Activated T-helper 1 cell treated with anti-CD3 and anti-CD28 coated beads, Interleukin-12 subunit alpha, Interleukin-12 subunit beta, Interleukin-2, Interleukin-4 antibody, amounts not matched to agents 30 ng/mL and 10 ng/mL and 1 ng/mL, durations not matched to agents 14 hours and 24 hours and 36 hours (primary cell): ENCODE measurements at regions of chr3 and their contacts with region 1.

Region 1: DNA sequence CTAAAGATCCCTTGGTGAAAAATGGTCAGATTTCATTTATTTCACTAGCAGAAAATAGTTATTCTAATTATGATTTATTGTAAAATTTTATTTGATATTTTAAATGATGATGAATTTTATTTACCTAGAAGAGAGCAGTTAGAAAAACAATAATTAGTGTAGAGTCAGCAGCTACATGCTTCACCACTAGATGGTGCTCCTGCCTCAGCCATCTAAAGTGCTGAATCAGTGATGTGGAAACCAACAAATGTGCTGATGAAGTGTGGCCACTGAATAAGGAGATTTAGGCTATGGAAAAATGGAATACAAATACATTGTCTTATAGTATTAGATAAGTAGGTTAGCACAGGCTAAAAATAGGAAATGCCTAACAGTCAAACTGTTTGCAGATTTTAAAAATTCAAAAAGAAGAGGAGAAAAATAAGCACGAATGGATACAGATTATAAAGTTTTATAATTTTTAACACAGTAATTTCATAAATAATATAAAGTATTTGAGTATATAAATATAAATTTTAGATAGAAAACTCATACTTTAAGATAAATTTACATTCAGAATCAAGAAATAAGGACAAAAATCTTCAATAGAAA is 109.8 kb downstream of the PPP2R3A start:
- DNase-seq: peak; percentile 47
- H3K4me3 Mint-ChIP-seq: no peak overlapping the region
- H3K27ac Mint-ChIP-seq: no peak overlapping the region
- H3K4me1 Mint-ChIP-seq: peaks cover 10% of the 10 kb centered on the region
- H3K27me3 Mint-ChIP-seq: peaks cover 6% of the 10 kb centered on the region

Region 2: GRCh38 chr3:135159681-135160247 is 915.5 kb before region 1 on chr3:
- intact Hi-C with region 1: no loop called
- DNase-seq: no peak
- H3K4me3 Mint-ChIP-seq: no peak overlapping the region
- H3K27ac Mint-ChIP-seq: no peak overlapping the region
- H3K4me1 Mint-ChIP-seq: no peaks in the 10 kb centered on the region
- H3K27me3 Mint-ChIP-seq: peaks cover 2% of the 10 kb centered on the region

Region 3: GRCh38 chr3:136305878-136306277 is 230.6 kb after region 1 on chr3:
- intact Hi-C with region 1: loop called (anchors 2 kb)
- DNase-seq: no peak
- H3K4me3 Mint-ChIP-seq: no peak overlapping the region
- H3K27ac Mint-ChIP-seq: peak overlapping the region; percentile 61
- H3K4me1 Mint-ChIP-seq: no peaks in the 10 kb centered on the region
- H3K27me3 Mint-ChIP-seq: no peaks in the 10 kb centered on the region

Region 4: DNA sequence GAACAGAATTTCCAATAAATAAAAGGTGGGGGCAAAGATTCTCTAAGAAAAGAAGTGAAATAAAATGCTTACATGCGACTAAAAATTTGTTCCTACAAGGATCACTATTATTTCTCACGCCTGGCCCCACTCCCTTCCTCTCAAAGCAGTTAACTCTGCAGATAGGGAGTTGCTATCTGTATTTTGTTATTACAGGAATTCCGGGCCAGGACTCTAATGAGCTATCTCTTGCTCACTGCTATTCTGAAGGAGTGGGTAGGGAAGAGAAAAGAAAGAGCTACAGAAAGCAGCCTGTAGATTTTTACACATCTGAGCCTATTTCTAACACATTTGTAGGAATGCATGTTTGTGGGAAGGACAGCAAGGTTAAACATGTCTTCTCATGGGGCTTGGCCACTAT is 315.3 kb after region 1 on chr3:
- intact Hi-C with region 1: loop called (anchors 1 kb)
- DNase-seq: no peak
- H3K4me3 Mint-ChIP-seq: no peak overlapping the region
- H3K27ac Mint-ChIP-seq: no peak overlapping the region
- H3K4me1 Mint-ChIP-seq: no peaks in the 10 kb centered on the region
- H3K27me3 Mint-ChIP-seq: no peaks in the 10 kb centered on the region

Region 5: DNA sequence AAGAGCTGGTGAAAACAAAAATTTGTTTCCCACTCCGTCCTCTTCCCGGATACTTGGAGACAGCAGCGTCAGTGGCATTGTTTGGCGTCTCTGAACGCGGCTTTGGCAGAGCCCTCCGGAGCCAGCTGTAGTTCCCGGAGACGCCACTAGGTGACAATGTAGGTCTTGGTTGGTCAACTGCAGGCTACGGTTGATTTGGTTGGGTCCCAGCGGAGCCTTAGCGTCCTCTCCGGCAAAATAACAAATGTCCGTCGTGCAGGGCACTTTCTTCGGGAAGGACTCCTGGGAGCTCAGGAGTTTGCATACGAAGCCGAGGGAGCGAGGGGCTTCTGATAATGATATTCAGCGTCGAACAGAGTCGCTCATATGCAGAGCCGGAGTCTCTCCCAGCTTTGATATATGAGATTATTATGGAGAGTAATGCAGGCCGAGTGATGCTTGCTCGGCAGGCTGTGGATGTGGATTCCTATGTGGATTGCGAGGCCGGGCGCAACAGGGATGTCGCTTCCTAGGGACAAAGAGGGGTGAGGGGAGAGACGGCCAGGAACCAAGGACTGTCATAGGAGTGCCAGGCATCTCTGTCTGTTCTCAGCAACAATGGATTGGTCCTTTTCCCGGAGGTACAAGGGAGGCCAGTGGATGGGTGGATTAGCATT is 957.3 kb after region 1 on chr3:
- intact Hi-C with region 1: loop called (anchors 1 kb)
- DNase-seq: peak; percentile 55
- H3K4me3 Mint-ChIP-seq: peak overlapping the region; percentile 66
- H3K27ac Mint-ChIP-seq: no peak overlapping the region
- H3K4me1 Mint-ChIP-seq: peaks cover 10% of the 10 kb centered on the region
- H3K27me3 Mint-ChIP-seq: peaks cover 24% of the 10 kb centered on the region

Region 6: DNA sequence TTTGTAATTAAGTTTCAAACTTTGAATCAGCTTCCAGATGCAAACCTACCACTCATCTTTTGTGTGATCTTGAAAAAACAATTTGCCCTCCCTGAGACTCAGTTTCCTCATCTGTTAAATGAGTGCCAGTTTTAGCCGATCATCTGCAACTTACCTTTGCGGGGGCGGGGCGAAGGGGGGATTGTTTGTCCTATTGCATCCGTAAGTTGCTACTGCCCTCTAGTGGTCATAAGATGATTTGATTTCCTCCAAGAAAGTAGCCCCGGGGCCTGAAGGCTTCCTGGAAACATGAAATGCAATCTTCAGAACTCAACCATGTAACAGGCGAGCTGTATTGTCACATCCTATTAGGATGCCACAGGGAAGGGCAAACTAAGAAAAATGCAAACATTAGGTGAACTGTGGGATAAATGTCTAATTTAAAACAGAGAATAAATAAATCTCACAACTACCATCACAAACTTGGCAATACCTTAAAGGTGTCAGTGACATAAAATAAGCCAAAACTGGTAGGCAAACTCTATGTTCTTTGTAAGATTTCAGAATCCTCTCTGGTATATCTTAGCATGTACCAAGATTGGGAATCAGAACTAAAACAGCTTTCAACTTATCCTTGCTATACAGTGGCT is 1871.1 kb after region 1 on chr3:
- intact Hi-C with region 1: loop called (anchors 10 kb)
- DNase-seq: peak; percentile 7
- H3K4me3 Mint-ChIP-seq: no peak overlapping the region
- H3K27ac Mint-ChIP-seq: no peak overlapping the region
- H3K4me1 Mint-ChIP-seq: peaks cover 5% of the 10 kb centered on the region
- H3K27me3 Mint-ChIP-seq: peaks cover 12% of the 10 kb centered on the region